Kidney (tissue), 22 donors: ENCODE measurements at regions of chr7 and their contacts with region 1.

Region 1: GRCh38 chr7:20598459-20599309 is 16.8 kb upstream of the ABCB5 start:
- DNase-seq: peak in 2 of 5 donors; percentile 64 to 77
- H3K4me3 ChIP-seq: peak overlapping the region in 2 of 3 donors; percentile 6 to 20
- H3K27ac ChIP-seq: no peak overlapping the region
- H3K4me1 ChIP-seq: no peaks in the 10 kb centered on the region
- H3K27me3 ChIP-seq: no peaks in the 10 kb centered on the region
- CTCF ChIP-seq: peak; percentile 74

Region 2: DNA sequence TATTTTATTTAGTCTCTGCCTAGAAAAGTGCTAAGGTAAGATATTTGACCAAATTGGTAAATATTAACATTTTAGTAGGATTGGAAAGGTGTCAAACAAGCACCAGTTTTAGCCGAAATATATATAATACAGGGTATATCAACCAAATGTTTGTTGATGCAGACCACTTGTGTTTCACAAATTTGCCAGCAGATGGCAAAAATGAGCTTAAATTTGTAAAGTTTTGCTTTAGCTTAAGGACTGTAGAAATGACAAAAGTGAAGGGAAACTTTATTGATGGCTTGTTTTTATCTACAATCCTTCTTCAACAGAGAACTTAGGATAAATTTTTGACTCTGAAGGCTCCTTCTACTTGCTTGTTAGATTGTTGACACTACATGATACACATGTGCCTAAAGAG is 885.0 kb before region 1 on chr7:
- intact Hi-C with region 1: loop called (anchors 10 kb)
- DNase-seq: peak in 3 of 5 donors; percentile 17 to 65 (median 54)
- H3K4me3 ChIP-seq: no peak overlapping the region
- H3K27ac ChIP-seq: no peak overlapping the region
- H3K4me1 ChIP-seq: peaks cover 0 to 4% (median 0%) of the 10 kb centered on the region in 3 donors
- H3K27me3 ChIP-seq: no peaks in the 10 kb centered on the region
- CTCF ChIP-seq: peak; percentile 63